Activated naive CD4-positive, alpha-beta T cell treated with anti-CD3 and anti-CD28 coated beads for 36 hours (primary cell): ENCODE measurements at regions of chrX and their contacts with region 1.

Region 1: DNA sequence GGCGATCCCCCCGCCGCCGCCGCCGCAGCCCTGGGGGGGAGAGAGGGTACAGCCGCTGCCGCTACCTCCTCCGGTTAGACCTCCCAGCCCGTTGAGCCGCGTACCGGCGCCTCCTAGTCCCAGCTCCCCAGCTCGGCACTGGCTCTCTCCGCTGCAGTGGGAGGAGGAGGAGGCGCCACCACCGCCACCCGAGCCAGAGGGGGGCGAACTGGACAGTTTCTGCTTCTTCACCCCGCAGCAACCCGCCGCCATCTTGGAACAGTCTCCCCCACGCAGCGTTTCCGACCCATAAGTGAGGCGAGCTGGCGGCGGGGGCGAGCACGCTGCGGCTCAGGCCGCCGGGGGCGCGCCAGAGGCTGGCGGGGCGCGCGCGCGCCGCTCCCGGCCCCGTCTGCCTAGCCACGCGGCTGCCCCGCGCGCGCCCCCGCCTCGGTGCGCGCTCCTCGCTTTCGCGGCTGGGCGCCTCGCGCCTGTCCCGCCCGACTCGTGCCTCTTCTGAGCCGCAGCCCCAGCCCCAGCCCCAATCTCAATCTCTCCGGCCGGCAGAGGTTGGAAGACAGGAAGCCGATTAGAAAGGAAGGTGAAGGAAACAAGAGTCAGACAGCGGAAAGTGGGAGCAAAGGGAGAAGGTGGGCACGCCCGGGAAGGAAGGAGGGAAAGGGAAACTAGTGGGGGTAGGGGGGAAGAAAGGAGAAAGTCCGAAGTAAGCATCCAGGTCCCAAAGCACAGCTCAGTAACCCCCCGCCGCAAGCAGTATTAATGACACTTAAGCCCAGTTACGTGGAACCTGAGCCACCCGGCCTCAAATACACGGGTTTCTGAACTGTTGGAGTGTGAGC is at the start of gene AMMECR1:
- DNase-seq: peak; percentile 79
- H3K4me3 Mint-ChIP-seq: peak within 1 kb of the TSS; percentile 91
- H3K27ac Mint-ChIP-seq: peak within 1 kb of the TSS; percentile 94
- H3K4me1 Mint-ChIP-seq: peaks cover 21% of the 10 kb centered on the region
- H3K27me3 Mint-ChIP-seq: no peaks in the 10 kb centered on the region
- total RNA-seq, gene AMMECR1: 3.7 to 4.1 TPM

Region 2: GRCh38 chrX:109536439-109537336 is 781.4 kb before region 1 on chrX and contains the start of gene NXT2:
- CTCF ChIA-PET with region 1: no interaction called
- intact Hi-C with region 1: loop called (anchors 2 kb)
- DNase-seq: peak; percentile 89
- H3K4me3 Mint-ChIP-seq: peak within 1 kb of the TSS; percentile 95
- H3K27ac Mint-ChIP-seq: peak within 1 kb of the TSS; percentile 98
- H3K4me1 Mint-ChIP-seq: peaks cover 19% of the 10 kb centered on the region
- H3K27me3 Mint-ChIP-seq: no peaks in the 10 kb centered on the region
- total RNA-seq, gene NXT2: 14.8 to 14.9 TPM

Region 3: GRCh38 chrX:110002300-110003166 is 315.5 kb before region 1 on chrX and contains the start of gene TMEM164:
- CTCF ChIA-PET with region 1: no interaction called
- intact Hi-C with region 1: loop called (anchors 5 kb)
- DNase-seq: peak; percentile 83
- H3K4me3 Mint-ChIP-seq: peak within 1 kb of the TSS; percentile 83
- H3K27ac Mint-ChIP-seq: peak within 1 kb of the TSS; percentile 81
- H3K4me1 Mint-ChIP-seq: peaks cover 31% of the 10 kb centered on the region
- H3K27me3 Mint-ChIP-seq: no peaks in the 10 kb centered on the region
- total RNA-seq, gene TMEM164: 11.9 to 12.0 TPM

Region 4: DNA sequence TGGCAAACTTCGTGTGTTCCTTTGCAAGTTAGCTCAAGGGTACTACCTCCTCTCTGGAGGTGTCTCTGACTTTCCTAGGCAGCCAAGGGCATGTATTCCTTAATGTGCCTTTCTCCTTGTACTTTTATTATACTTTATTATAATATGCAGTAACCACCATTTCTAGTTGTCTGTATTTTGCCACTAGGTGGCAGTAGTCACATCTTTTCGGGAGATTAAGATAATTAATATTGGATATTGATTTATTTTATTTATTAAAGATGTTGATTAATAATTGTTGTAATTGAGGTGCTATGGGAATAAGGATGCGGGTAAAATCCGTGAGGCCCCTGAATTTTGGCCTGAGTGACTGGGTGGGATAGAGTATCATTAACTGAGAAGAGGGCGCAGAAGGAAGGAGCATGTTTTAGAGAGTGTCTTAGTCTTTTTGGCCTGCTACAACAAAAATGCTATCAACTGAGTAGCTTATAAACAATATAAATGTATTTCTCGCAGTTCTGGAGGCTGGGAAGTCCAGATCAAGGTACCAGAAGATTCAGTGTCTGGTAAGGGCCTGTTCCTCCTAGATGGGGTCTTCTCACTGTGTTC is 161.8 kb before region 1 on chrX:
- CTCF ChIA-PET with region 1: interaction called, 5 read pairs
- intact Hi-C with region 1: loop called (anchors 2 kb)
- DNase-seq: no peak
- H3K4me3 Mint-ChIP-seq: no peak overlapping the region
- H3K27ac Mint-ChIP-seq: no peak overlapping the region
- H3K4me1 Mint-ChIP-seq: peaks cover 10% of the 10 kb centered on the region
- H3K27me3 Mint-ChIP-seq: no peaks in the 10 kb centered on the region

Region 5: DNA sequence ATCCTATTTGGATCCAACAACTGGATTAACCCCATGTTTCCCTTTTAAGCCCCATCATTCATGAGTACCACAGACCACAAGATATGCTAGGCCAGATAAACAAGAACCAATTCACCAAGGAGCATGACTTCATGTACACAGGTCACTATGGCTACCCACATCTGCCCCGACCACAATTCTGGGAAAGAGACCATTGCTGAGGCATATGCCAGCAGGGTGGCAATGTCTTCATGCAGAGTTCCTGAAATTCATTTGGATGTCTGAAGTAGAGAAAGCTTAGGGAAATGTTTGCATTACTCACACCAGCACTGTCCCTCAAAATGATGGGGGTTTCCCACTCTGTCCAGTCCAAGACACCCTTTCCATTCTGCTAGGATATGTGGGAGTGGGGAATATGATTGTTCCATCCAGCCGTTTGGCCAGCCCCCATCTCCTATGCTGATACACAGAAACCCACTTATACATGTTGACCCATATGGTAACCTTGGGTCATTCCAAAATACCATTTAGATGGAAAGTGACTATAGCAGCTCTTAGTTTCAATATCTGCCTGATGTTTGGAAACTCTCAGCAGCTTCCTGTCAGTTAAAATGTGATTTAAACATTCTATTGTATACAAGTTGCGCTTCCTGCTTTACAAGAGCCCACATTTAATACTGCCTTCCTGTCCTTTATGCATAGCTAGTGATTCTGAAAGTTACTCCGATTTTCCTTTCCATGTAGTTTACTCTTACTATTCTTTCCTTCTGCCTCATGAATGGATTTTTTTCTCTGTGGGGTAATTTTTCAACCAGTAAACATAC is 129.1 kb before region 1 on chrX:
- CTCF ChIA-PET with region 1: no interaction called
- intact Hi-C with region 1: loop called (anchors 5 kb)
- DNase-seq: no peak
- H3K4me3 Mint-ChIP-seq: no peak overlapping the region
- H3K27ac Mint-ChIP-seq: peak overlapping the region; percentile 83
- H3K4me1 Mint-ChIP-seq: peaks cover 13% of the 10 kb centered on the region
- H3K27me3 Mint-ChIP-seq: no peaks in the 10 kb centered on the region

Region 6: GRCh38 chrX:110226931-110227330 is 91.1 kb before region 1 on chrX:
- CTCF ChIA-PET with region 1: no interaction called
- intact Hi-C with region 1: loop called (anchors 1 kb)
- DNase-seq: no peak
- H3K4me3 Mint-ChIP-seq: no peak overlapping the region
- H3K27ac Mint-ChIP-seq: no peak overlapping the region
- H3K4me1 Mint-ChIP-seq: peaks cover 31% of the 10 kb centered on the region
- H3K27me3 Mint-ChIP-seq: no peaks in the 10 kb centered on the region

Region 7: GRCh38 chrX:110407910-110408545 is 90.0 kb after region 1 on chrX:
- CTCF ChIA-PET with region 1: interaction called, 3 read pairs
- intact Hi-C with region 1: loop called (anchors 2 kb)
- DNase-seq: peak; percentile 50
- H3K4me3 Mint-ChIP-seq: no peak overlapping the region
- H3K27ac Mint-ChIP-seq: no peak overlapping the region
- H3K4me1 Mint-ChIP-seq: peaks cover 4% of the 10 kb centered on the region
- H3K27me3 Mint-ChIP-seq: no peaks in the 10 kb centered on the region